Activated CD4-positive, alpha-beta T cell treated with anti-CD3 and anti-CD28 coated beads, Interleukin-2, amount 10 ng/mL, durations not matched to agents 24 days and 14 days (primary cell): ENCODE measurements at regions of chr12 and their contacts with region 1.

Region 1: DNA sequence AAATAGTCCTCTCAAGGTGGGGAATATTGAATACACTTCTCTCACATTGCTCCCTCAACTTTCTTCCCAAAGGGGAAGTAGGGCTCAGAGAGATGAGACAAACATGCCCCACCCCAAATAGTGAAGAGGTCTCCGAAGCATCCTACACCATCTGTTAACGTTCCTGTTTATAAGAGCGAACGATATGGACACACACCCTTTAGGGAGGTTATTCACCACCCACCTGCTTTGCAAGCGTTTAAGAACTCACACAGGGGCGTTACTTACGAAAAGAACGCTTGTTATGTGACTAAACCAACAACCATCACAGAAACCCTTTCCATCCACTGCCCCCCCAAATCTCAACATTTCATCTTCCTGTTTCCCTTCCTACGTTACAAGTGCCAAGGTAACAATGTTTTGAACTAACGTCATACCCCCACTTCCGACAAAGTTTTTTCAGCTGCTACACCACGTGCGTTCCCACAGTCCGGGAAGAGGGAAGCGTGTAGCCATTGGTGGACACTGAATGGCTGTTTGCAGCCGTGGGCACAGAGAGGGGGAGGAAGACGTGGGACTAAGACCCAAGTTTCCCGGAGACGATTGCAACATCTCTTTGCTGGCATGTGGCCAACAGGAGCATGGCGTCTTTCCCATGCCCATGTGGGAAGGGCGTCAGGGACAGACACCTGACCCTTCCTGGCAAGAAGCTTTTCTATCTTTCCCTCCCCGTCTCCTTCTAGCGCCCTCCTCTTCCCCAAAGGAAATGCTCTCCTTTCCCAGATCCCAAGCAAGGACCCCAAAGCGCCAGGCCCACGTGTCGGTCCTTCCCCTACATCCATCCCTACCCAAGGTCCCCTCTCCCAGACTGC is 1.2 kb downstream of the YBX3 start:
- DNase-seq: peak; percentile 89
- H3K4me3 Mint-ChIP-seq: peak overlapping the region; percentile 96
- H3K27ac Mint-ChIP-seq: peak overlapping the region; percentile 95
- H3K4me1 Mint-ChIP-seq: peaks cover 34% of the 10 kb centered on the region
- H3K27me3 Mint-ChIP-seq: peaks cover 31% of the 10 kb centered on the region

Region 2: DNA sequence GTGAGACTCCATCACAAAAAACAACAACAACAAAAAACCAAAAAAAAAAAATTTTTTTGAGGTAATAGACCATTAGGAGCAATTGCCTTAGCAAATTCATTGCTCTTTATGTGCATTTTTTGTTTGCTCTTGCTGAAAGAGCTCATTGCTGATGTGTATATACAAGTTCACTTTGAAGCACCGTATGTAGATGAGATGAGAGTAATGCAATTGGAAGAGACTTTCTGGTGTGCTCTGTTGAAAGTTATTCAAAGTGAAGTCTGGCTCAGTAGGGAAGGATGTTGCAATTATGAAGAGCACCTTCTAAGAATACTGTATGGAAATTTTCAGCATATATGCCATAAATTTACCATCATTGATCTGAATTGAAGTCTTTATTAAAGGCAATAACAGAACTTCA is 460.9 kb before region 1 on chr12:
- intact Hi-C with region 1: no loop called
- DNase-seq: no peak
- H3K4me3 Mint-ChIP-seq: no peak overlapping the region
- H3K27ac Mint-ChIP-seq: no peak overlapping the region
- H3K4me1 Mint-ChIP-seq: no peaks in the 10 kb centered on the region
- H3K27me3 Mint-ChIP-seq: peaks cover 24% of the 10 kb centered on the region

Region 3: DNA sequence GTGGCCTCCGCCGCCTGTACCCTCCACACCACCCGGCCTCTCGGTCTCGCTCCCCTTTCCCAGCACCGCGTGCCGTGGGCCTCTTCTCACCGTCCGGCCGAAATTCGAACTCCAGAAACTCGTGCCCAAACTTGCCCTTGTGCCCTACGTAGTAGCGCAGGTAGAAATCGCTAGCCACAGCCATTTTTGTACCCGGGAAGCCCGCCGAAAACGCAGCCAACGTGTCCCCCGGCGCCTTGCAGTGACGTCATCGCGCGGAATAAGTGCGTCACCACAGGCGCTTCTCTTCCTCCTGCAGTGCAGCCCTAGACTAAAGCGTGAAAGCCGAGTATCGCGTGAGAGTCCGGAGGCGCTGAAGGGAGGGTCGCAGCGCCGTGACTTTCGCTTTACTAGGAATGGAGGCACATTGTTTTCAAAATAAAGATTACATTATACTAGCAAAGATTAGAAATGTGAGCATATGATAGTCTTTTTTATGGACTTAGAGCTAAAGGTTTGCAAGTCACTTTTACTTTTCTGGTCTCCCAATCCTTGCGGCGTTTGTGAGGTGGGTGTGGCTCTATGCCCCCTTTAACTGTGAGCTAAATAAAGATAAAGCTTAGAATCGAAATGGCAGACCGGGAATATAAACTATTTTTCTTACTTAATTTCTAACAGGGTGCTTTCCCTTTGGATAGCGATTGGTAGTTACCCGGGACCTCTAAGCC is 108.4 kb before region 1 on chr12 and contains the start of gene MAGOHB:
- intact Hi-C with region 1: loop called (anchors 1 kb)
- DNase-seq: peak; percentile 100
- H3K4me3 Mint-ChIP-seq: peak within 1 kb of the TSS; percentile 100
- H3K27ac Mint-ChIP-seq: peak within 1 kb of the TSS; percentile 100
- H3K4me1 Mint-ChIP-seq: peaks cover 27% of the 10 kb centered on the region
- H3K27me3 Mint-ChIP-seq: peaks cover 19% of the 10 kb centered on the region
- total RNA-seq, gene MAGOHB: 88.6 and 91.1 TPM in 2 replicates

Region 4: DNA sequence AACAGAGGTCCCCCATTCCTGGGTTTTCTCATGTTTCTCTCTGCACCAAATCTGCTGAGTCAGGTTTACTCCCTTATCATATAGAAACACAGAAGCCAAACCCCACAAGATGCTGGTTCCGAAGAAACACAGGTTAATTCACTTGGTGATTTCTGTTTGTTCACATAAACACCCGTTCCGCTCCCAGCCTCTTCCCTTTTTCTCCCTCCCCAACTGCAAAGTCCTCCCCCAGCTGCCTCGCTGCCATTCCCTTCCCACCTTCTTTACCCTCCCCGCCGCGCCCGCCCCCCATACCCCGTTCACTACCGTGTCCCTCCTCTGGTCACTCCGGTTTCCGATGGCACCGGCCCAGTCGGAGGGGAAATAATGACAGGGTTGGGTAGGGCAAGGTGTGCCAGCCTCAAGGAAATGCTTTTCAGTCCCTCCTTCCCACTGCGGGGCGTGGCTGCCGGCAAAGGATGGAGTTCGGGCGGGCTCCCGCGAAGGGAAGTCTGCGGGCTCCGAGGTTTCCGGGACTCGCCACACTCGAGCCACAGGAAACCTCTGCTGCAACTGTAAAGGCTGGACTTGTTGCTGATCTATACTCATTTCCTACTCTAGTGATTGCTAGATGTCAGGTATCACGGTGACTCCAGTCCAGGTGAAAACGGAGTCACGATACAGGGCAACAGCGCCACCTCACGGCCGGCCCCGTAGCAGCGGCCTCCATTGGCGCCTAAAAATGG is 48.1 kb before region 1 on chr12 and contains the start of gene STYK1:
- intact Hi-C with region 1: loop called (anchors 2 kb)
- DNase-seq: peak; percentile 91
- H3K4me3 Mint-ChIP-seq: peak within 1 kb of the TSS; percentile 78
- H3K27ac Mint-ChIP-seq: peak within 1 kb of the TSS; percentile 38
- H3K4me1 Mint-ChIP-seq: peaks cover 38% of the 10 kb centered on the region
- H3K27me3 Mint-ChIP-seq: peaks cover 58% of the 10 kb centered on the region
- total RNA-seq, gene STYK1: not detected in 2 replicates

Region 5: DNA sequence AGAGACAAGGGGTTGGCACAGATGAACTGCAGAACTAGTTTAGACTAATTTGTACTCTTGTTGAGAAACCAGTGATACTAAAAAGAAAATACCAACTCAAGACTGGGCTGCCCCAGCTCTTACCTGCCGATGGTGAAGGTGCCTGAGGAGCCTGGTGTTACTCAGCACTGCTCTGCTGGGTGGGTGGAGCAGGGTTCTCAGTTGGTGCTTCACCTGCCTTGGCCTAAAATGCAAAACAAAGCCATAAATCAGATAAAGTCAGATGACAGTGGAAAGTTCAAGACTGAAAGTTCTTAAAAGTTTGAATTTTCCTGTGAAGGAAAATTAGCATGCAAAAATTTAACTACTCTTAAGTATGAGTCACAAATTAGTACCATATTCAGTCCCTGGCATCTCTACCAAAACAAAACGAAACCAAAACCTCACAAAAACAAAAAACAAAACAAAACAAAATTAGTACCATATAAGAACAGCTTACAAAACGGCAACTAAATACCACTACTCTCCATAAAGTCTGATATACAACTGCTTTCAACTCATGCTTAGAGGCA is 20.7 kb before region 1 on chr12:
- intact Hi-C with region 1: loop called (anchors 1 kb)
- DNase-seq: peak; percentile 73
- H3K4me3 Mint-ChIP-seq: peak overlapping the region; percentile 8
- H3K27ac Mint-ChIP-seq: peak overlapping the region; percentile 26
- H3K4me1 Mint-ChIP-seq: peaks cover 15% of the 10 kb centered on the region
- H3K27me3 Mint-ChIP-seq: no peaks in the 10 kb centered on the region

Region 6: GRCh38 chr12:10736463-10736862 is 14.6 kb after region 1 on chr12:
- intact Hi-C with region 1: no loop called
- DNase-seq: no peak
- H3K4me3 Mint-ChIP-seq: no peak overlapping the region
- H3K27ac Mint-ChIP-seq: no peak overlapping the region
- H3K4me1 Mint-ChIP-seq: peaks cover 5% of the 10 kb centered on the region
- H3K27me3 Mint-ChIP-seq: peaks cover 35% of the 10 kb centered on the region

Region 7: GRCh38 chr12:10749700-10750384 is 28.0 kb after region 1 on chr12:
- intact Hi-C with region 1: loop called (anchors 2 kb)
- DNase-seq: peak; percentile 93
- H3K4me3 Mint-ChIP-seq: peak overlapping the region; percentile 66
- H3K27ac Mint-ChIP-seq: no peak overlapping the region
- H3K4me1 Mint-ChIP-seq: peaks cover 17% of the 10 kb centered on the region
- H3K27me3 Mint-ChIP-seq: peaks cover 36% of the 10 kb centered on the region

Region 8: DNA sequence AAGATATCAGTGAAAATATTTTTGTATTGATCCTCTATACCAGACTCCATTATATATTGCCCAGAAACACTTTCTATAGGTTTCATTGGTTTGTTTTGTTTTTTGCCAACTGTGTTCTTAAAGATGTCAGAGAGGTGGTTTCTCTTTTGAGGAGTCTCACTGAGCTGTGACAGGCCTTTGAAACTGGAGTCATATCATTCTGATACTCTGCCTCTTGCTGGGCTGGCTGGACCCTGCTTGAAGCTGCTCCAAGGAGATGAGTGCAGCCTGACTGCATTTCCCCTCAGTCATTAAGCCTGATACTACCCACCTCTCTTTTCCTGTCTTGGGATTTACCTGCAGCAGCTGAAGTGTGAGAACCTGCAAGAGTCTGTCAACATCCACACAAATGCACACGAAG is 429.0 kb after region 1 on chr12:
- intact Hi-C with region 1: no loop called
- DNase-seq: no peak
- H3K4me3 Mint-ChIP-seq: no peak overlapping the region
- H3K27ac Mint-ChIP-seq: no peak overlapping the region
- H3K4me1 Mint-ChIP-seq: no peaks in the 10 kb centered on the region
- H3K27me3 Mint-ChIP-seq: no peaks in the 10 kb centered on the region

Region 9: GRCh38 chr12:11171145-11171968 is 449.5 kb after region 1 on chr12 and contains the start of gene SMIM10L1:
- intact Hi-C with region 1: loop called (anchors 1 kb)
- DNase-seq: peak; percentile 97
- H3K4me3 Mint-ChIP-seq: peak within 1 kb of the TSS; percentile 98
- H3K27ac Mint-ChIP-seq: peak within 1 kb of the TSS; percentile 98
- H3K4me1 Mint-ChIP-seq: peaks cover 49% of the 10 kb centered on the region
- H3K27me3 Mint-ChIP-seq: no peaks in the 10 kb centered on the region
- total RNA-seq, gene SMIM10L1: 9.5 and 10.1 TPM in 2 replicates